SK-N-SH (cell line): ENCODE measurements at regions of chr1 and their contacts with region 1.

Region 1: DNA sequence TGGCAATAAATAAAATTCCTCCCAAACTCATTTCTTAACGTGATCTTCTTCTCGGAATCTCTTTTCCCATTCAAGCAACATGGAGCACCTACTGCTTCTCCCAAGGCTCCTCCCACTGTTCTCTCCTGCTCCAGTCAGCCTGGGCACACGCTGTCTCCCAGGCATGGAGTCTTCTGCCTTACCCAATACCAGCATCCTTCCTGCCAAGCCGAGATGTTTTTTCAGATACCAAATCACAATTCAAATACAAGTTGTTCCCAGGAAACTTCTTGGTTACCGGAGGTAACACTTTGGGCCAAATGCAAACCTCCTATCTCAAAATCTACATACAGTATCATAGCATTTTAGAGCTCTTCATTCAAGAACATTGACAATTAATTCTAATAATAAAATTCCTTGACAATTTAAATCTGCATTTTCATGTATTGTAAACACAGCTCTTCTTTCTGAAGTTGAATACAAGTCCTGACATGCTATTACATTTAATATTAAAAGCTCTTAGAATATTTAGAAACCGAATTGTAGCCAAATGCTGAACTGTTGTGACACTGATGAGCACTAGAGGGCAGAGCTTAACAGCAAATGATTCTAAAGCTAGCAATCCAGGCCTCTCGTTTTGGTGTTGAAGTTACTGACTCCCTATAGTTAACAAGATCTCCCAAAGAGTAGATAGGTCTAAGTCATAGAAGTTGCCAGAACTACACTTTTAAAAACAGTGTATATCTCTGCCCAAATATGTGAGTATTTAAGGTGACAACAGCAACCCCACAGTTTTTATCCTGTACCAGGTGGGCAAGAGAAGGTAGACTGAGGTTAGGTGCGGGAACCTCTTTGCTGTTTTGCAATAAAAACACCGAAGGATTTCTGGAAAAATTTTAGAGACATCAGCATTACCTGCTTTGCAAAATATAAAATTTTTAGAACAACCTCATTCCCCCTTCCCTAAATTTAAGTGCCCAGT is 52.3 kb downstream of the BCAR3 start:
- DNase-seq: peak; percentile 53
- H3K4me3 ChIP-seq: no peak overlapping the region; a peak in 1 of 4 replicates
- H3K27ac ChIP-seq: peak overlapping the region; percentile 53 to 98
- H3K4me1 ChIP-seq: peaks cover 27 to 41% of the 10 kb centered on the region in 2 experiments
- H3K27me3 ChIP-seq: no peaks in the 10 kb centered on the region
- CTCF ChIP-seq: peak; percentile 95
- EP300 ChIP-seq: no peak; a peak in 1 of 4 replicates
- RAD21 ChIP-seq: peak; percentile 99

Region 2: DNA sequence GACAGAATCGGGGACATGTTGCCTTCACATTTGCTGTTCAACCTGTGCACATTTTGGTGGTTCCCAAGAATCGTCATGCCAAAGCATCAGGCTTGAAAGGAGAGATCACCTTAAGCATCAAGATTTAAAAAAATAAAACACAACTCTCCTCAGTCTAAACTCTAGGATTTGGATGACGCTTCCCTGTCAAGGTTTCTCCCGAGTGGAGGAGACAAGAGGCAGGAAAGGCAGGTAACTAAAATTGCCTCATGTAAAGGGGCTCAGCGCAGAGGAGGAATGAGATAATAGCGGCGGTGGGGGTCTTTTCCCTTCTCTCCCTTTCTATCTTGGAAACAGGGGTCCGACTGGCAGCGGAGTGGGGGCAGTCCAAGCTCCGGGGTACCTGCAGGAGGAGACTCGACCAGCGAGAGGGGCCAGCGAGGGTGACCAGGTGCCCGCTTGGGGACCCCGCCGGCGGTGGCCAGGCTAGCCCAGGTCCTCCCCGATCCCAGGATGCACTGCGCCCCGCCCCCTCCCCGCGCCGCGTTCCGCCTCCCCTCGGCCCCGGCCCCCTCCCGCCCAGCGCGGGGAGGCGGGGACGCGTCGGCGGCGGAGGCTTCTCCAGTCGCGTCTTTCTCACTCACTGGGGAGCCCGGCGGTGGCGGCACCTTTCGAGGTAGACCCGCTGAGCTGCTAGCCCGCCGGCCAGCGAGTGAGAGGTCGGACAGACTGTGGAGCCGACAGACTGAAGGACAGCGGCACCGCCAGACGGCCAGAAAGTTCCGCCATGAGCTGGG is 181.7 kb before region 1 on chr1 and contains the start of gene FNBP1L:
- CTCF ChIA-PET with region 1: interaction called, 14 read pairs
- POLR2A ChIA-PET with region 1: no interaction called
- DNase-seq: peak; percentile 98
- H3K4me3 ChIP-seq: peak within 1 kb of the TSS; percentile 96 to 99
- H3K27ac ChIP-seq: peak within 1 kb of the TSS; percentile 78 to 92
- H3K4me1 ChIP-seq: peaks cover 4 to 13% of the 10 kb centered on the region in 2 experiments; a peak in 3 of 4 replicates
- H3K27me3 ChIP-seq: no peaks in the 10 kb centered on the region
- CTCF ChIP-seq: no peak
- EP300 ChIP-seq: no peak
- RAD21 ChIP-seq: no peak
- polyA plus RNA-seq, gene FNBP1L: 16.5 and 21.5 TPM in 2 replicates

Region 3: DNA sequence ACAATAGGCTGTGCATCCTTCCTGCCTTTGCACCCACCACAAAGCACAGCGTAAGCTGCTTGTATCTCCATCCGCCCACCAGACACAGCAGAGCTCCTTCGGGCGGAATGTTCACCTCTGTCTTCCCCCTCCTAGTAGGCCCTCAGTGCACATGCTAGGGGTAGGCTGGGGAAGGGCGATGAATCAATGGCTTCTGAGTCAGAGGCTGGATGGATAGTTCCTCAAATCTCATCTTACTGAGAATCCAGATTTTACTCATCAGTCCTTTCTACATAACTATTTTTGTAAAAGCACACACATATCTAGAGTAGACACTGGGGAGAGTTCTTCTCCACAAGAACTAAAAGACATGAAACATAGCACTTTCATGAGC is 21.6 kb before region 1 on chr1:
- CTCF ChIA-PET with region 1: interaction called, 36 read pairs
- POLR2A ChIA-PET with region 1: interaction called, 5 read pairs
- DNase-seq: no peak
- H3K4me3 ChIP-seq: no peak overlapping the region
- H3K27ac ChIP-seq: peak overlapping the region; percentile 92 to 98
- H3K4me1 ChIP-seq: peaks cover 65 to 69% of the 10 kb centered on the region in 2 experiments
- H3K27me3 ChIP-seq: no peaks in the 10 kb centered on the region
- CTCF ChIP-seq: no peak
- EP300 ChIP-seq: peak in 1 of 2 experiments; percentile 18; a peak in 1 of 4 replicates
- RAD21 ChIP-seq: no peak

Region 4: DNA sequence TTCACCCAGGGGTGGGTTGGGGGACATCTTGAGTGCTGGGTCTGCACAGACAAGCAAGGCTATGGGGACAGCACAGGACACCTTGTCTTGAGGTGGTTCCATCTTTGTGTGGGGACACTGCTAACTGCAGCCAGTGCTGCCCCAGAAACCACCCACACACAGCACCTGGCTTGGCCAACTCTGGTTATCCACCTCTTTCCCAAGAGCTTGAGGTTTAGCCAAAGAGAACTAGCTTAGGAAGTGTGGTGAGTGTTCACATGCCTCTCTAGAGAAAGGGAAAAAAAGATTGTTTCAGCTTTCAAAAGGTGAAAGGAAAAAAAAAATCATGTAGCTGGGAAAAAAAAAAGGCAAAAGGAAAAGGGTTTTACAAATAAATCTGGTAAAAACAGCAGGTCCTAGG is 19.9 kb after region 1 on chr1:
- CTCF ChIA-PET with region 1: interaction called, 14 read pairs
- POLR2A ChIA-PET with region 1: no interaction called
- DNase-seq: no peak
- H3K4me3 ChIP-seq: no peak overlapping the region
- H3K27ac ChIP-seq: no peak overlapping the region
- H3K4me1 ChIP-seq: no peaks in the 10 kb centered on the region; a peak in 2 of 4 replicates
- H3K27me3 ChIP-seq: no peaks in the 10 kb centered on the region
- CTCF ChIP-seq: no peak
- EP300 ChIP-seq: no peak
- RAD21 ChIP-seq: no peak

Region 5: DNA sequence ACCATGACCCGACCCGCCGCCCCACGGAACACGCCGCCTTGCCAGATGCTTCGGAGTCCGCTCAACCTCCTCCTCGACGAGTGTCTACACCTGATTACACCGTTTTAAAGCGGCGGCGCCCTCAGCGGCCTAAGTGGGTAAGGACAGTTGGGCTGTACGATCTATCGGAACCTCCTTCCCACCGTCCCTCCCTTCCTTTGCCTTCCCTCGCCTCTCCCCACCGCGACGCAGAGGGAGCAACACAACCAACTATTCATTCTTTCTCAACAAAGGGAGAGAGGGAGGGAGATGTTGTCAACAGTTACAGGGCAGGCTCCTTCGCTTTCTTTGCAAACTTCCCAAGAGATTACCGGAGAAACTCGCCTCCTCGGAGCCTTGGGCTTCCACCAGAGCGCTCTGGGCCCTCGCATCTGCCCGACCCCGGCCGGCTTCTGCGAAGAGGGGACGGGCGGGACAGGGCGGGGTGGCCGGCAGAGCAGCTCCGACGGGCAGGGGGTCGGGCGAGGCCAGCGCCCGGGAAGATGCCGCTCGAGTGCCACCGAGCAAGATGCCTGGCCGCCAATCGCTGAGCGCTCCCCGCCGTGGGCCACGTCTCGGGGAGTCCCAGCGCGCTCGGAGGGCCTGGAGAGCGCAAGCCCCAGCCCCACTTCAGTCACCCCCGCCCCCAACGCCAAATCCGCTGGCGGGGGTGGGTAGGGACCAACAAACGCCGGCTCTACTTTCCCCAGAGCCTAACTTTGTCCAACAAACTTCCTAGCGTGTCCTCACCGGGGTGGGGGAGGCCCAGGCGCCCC is 51.6 kb after region 1 on chr1:
- CTCF ChIA-PET with region 1: interaction called, 61 read pairs
- POLR2A ChIA-PET with region 1: no interaction called
- DNase-seq: peak; percentile 80
- H3K4me3 ChIP-seq: peak overlapping the region; percentile 75 to 86
- H3K27ac ChIP-seq: peak overlapping the region; percentile 86 to 95
- H3K4me1 ChIP-seq: peaks cover 19 to 24% of the 10 kb centered on the region in 2 experiments; a peak in 3 of 4 replicates
- H3K27me3 ChIP-seq: no peaks in the 10 kb centered on the region
- CTCF ChIP-seq: peak; percentile 64
- EP300 ChIP-seq: no peak
- RAD21 ChIP-seq: peak; percentile 64

Region 6: GRCh38 chr1:93827633-93828366 is 198.4 kb after region 1 on chr1:
- CTCF ChIA-PET with region 1: interaction called, 591 read pairs
- POLR2A ChIA-PET with region 1: no interaction called
- DNase-seq: no peak
- H3K4me3 ChIP-seq: no peak overlapping the region
- H3K27ac ChIP-seq: peak overlapping the region; percentile 60 to 96
- H3K4me1 ChIP-seq: peaks cover 7 to 51% of the 10 kb centered on the region in 2 experiments; a peak in 3 of 4 replicates
- H3K27me3 ChIP-seq: no peaks in the 10 kb centered on the region
- CTCF ChIP-seq: no peak
- EP300 ChIP-seq: no peak
- RAD21 ChIP-seq: no peak